ENCODE measurements at regions of chr1 and their contacts with region 1.

Region 1: DNA sequence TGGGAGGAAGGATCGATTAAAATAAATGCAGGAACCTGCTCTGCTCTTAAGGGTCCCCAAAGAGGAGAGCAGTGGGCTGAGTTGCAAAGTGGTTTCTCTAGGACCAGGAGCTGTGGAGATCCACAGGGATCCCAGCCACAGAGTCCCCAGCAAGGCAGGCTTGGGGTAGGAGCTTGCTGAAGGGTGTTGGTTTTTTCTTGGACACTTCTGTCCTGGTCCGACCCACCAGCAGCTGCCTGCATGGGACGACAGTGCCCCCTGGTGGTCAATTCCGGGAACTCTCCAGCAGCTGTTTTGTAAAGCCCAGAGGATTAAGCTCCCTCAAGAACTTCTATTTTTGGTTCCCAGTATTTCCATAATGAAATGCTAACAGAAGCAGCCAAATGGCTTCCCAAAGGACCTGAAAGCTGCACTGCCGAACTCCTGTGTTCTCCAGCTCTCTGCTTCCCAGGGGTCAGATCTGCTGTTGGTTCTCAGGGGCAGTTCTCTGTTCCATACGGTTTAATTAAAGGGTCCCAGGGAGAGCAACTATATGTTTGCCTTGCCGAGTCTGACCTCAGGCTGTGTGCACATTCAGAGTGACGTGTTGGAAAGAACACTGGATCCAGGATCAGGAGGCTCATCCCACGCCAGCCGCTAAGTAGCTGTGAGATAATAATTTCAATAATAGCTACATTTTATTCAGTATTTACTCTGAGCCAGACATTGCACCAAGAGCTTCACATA is 23.2 kb downstream of the NENF start:
- DNase-seq: peak; percentile 84
- ATAC-seq: peak; percentile 85
- H3K4me3 ChIP-seq: no peak overlapping the region
- H3K4me3 Mint-ChIP-seq: no peak overlapping the region
- H3K27ac ChIP-seq: no peak overlapping the region
- H3K27ac Mint-ChIP-seq: no peak overlapping the region
- H3K4me1 ChIP-seq: peaks cover 0 to 6% of the 10 kb centered on the region in 2 donors
- H3K4me1 Mint-ChIP-seq: no peaks in the 10 kb centered on the region
- H3K27me3 ChIP-seq: peaks cover 0 to 4% (median 0%) of the 10 kb centered on the region in 4 experiments
- H3K27me3 Mint-ChIP-seq: no peaks in the 10 kb centered on the region
- CTCF ChIP-seq: peak; percentile 99

Region 2: GRCh38 chr1:212012034-212012740 is 443.8 kb before region 1 on chr1:
- CTCF ChIA-PET with region 1: interaction called, 19 read pairs
- POLR2A ChIA-PET with region 1: no interaction called
- intact Hi-C with region 1: loop called (anchors 1 kb)
- DNase-seq: peak; percentile 68
- ATAC-seq: peak; percentile 94
- H3K4me3 ChIP-seq: no peak overlapping the region
- H3K4me3 Mint-ChIP-seq: no peak overlapping the region
- H3K27ac ChIP-seq: no peak overlapping the region
- H3K27ac Mint-ChIP-seq: no peak overlapping the region
- H3K4me1 ChIP-seq: no peaks in the 10 kb centered on the region
- H3K4me1 Mint-ChIP-seq: no peaks in the 10 kb centered on the region
- H3K27me3 ChIP-seq: no peaks in the 10 kb centered on the region
- H3K27me3 Mint-ChIP-seq: no peaks in the 10 kb centered on the region
- CTCF ChIP-seq: peak; percentile 96

Region 3: GRCh38 chr1:212070720-212071302 is 385.2 kb before region 1 on chr1:
- CTCF ChIA-PET with region 1: interaction called, 364 read pairs
- POLR2A ChIA-PET with region 1: no interaction called
- intact Hi-C with region 1: loop called (anchors 1 kb)
- DNase-seq: peak; percentile 64
- ATAC-seq: no peak
- H3K4me3 ChIP-seq: no peak overlapping the region
- H3K4me3 Mint-ChIP-seq: no peak overlapping the region
- H3K27ac ChIP-seq: no peak overlapping the region
- H3K27ac Mint-ChIP-seq: no peak overlapping the region
- H3K4me1 ChIP-seq: no peaks in the 10 kb centered on the region
- H3K4me1 Mint-ChIP-seq: no peaks in the 10 kb centered on the region
- H3K27me3 ChIP-seq: no peaks in the 10 kb centered on the region
- H3K27me3 Mint-ChIP-seq: no peaks in the 10 kb centered on the region
- CTCF ChIP-seq: peak; percentile 63

Region 4: GRCh38 chr1:212311846-212312497 is 144.0 kb before region 1 on chr1:
- CTCF ChIA-PET with region 1: interaction called, 18 read pairs
- POLR2A ChIA-PET with region 1: no interaction called
- intact Hi-C with region 1: no loop called
- DNase-seq: no peak
- ATAC-seq: no peak
- H3K4me3 ChIP-seq: no peak overlapping the region
- H3K4me3 Mint-ChIP-seq: no peak overlapping the region
- H3K27ac ChIP-seq: peak overlapping the region in 1 of 2 donors; percentile 28
- H3K27ac Mint-ChIP-seq: no peak overlapping the region
- H3K4me1 ChIP-seq: peaks cover 6 to 10% of the 10 kb centered on the region in 2 donors
- H3K4me1 Mint-ChIP-seq: peaks cover 47% of the 10 kb centered on the region
- H3K27me3 ChIP-seq: no peaks in the 10 kb centered on the region
- H3K27me3 Mint-ChIP-seq: no peaks in the 10 kb centered on the region
- CTCF ChIP-seq: no peak

Region 5: GRCh38 chr1:212414328-212415106 is 41.4 kb before region 1 on chr1 and contains the start of gene PACC1:
- CTCF ChIA-PET with region 1: interaction called, 15 read pairs
- POLR2A ChIA-PET with region 1: no interaction called
- intact Hi-C with region 1: no loop called
- DNase-seq: peak; percentile 98
- ATAC-seq: peak; percentile 98
- H3K4me3 ChIP-seq: peak within 1 kb of the TSS; percentile 64 to 93 (median 83)
- H3K4me3 Mint-ChIP-seq: peak within 1 kb of the TSS; percentile 99
- H3K27ac ChIP-seq: peak within 1 kb of the TSS; percentile 83 to 84
- H3K27ac Mint-ChIP-seq: peak within 1 kb of the TSS; percentile 86
- H3K4me1 ChIP-seq: peaks cover 24 to 35% of the 10 kb centered on the region in 2 donors
- H3K4me1 Mint-ChIP-seq: peaks cover 39% of the 10 kb centered on the region
- H3K27me3 ChIP-seq: no peaks in the 10 kb centered on the region
- H3K27me3 Mint-ChIP-seq: no peaks in the 10 kb centered on the region
- CTCF ChIP-seq: no peak
- total RNA-seq, gene PACC1: 16.7 and 18.3 TPM in 2 replicates

Region 6: GRCh38 chr1:212838145-212838544 is 382.2 kb after region 1 on chr1:
- CTCF ChIA-PET with region 1: no interaction called
- POLR2A ChIA-PET with region 1: no interaction called
- intact Hi-C with region 1: no loop called
- DNase-seq: no peak
- ATAC-seq: no peak
- H3K4me3 ChIP-seq: no peak overlapping the region
- H3K4me3 Mint-ChIP-seq: no peak overlapping the region
- H3K27ac ChIP-seq: no peak overlapping the region
- H3K27ac Mint-ChIP-seq: no peak overlapping the region
- H3K4me1 ChIP-seq: no peaks in the 10 kb centered on the region
- H3K4me1 Mint-ChIP-seq: peaks cover under 1% of the 10 kb centered on the region
- H3K27me3 ChIP-seq: no peaks in the 10 kb centered on the region
- H3K27me3 Mint-ChIP-seq: no peaks in the 10 kb centered on the region
- CTCF ChIP-seq: no peak

Region 7: DNA sequence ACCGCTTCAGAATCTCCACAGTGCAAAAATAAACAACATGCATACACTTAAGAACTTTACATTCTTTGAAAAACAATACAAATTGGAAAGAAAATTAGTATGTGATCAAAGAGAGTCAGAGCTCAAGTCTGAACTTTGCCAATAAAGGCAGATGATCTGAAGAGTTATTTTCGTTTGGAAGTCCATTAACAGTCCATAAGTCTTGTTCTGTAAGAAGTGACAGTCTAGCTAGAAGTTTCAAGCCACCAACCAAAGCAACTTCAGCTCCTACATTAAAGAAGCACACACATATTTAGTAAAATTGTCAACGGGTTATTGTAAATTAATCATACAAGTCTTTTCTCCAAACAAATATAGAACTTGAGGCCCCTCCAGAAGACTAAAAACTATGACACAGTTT is 539.0 kb after region 1 on chr1:
- CTCF ChIA-PET with region 1: interaction called, 21 read pairs
- POLR2A ChIA-PET with region 1: no interaction called
- intact Hi-C with region 1: loop called (anchors 1 kb)
- DNase-seq: no peak
- ATAC-seq: no peak
- H3K4me3 ChIP-seq: no peak overlapping the region
- H3K4me3 Mint-ChIP-seq: no peak overlapping the region
- H3K27ac ChIP-seq: no peak overlapping the region
- H3K27ac Mint-ChIP-seq: no peak overlapping the region
- H3K4me1 ChIP-seq: no peaks in the 10 kb centered on the region
- H3K4me1 Mint-ChIP-seq: peaks cover 2% of the 10 kb centered on the region
- H3K27me3 ChIP-seq: no peaks in the 10 kb centered on the region
- H3K27me3 Mint-ChIP-seq: no peaks in the 10 kb centered on the region
- CTCF ChIP-seq: no peak